Right ventricle myocardium superior (tissue), 1 donor: ENCODE measurements at regions of chr12 and their contacts with region 1.

Region 1: GRCh38 chr12:123106628-123107359 is 44.1 kb downstream of the PITPNM2 start:
- DNase-seq: peak; percentile 72
- ATAC-seq: peak; percentile 40

Region 2: DNA sequence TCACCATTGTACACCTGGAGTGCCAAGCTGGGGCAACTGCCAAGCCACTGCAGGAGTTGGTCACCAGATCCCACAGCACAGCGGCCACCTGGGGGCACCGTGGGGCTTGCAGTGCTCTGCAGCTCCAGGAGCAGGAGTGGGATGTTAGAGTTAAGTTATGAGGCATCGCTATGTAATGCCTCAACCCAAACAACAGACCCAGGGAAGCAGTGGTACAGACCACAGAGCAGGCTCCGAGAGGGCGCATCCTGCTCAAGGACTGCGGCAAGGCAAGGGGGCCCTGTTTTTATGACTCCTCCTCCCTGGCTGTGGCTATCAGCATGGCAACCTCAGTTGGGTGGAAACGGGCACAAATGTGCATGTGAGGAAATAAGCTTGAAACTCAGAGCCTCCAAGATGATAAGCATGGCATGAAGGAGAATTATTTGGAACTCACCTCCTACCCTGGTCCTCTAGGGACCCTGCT is 63.2 kb before region 1 on chr12:
- intact Hi-C with region 1: loop called (anchors 10 kb)
- DNase-seq: peak; percentile 90
- ATAC-seq: peak; percentile 96